ENCODE measurements at regions of chr2 and their contacts with region 1.

Region 1: DNA sequence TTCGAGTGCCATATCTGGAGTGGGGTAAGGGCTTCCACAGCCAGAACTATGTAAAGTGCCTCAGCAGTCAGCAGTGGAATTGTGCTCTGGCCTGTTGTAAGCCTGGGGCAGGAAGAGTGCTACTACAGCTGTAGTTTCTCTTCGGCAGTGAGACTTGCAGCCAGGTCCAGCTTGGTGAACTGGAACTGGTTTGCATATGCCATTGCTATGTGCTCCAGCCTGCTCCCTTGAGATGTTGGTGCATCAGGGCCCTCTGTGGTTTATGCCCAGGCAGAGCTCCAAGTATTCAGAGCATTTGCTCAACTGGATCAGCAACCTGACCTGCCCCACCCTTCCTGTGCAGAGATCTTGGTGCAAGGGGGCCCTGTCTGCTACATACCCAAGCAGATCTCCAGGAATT is 47.8 kb downstream of the ZNF804A start:
- DNase-seq: peak; percentile 63
- H3K4me3 ChIP-seq: peak overlapping the region in 1 of 3 experiments; percentile 0
- H3K27ac ChIP-seq: no peak overlapping the region
- H3K4me1 ChIP-seq: peaks cover 14% of the 10 kb centered on the region
- H3K27me3 ChIP-seq: no peaks in the 10 kb centered on the region
- CTCF ChIP-seq: no peak

Region 2: GRCh38 chr2:185255566-185255965 is 609.4 kb after region 1 on chr2:
- CTCF ChIA-PET with region 1: no interaction called
- dilution Hi-C with region 1: no loop called
- in situ Hi-C with region 1: loop called in 1 of 2 experiments (anchors 25 kb)
- intact Hi-C with region 1: no loop called
- DNase-seq: peak; percentile 4
- H3K4me3 ChIP-seq: no peak overlapping the region
- H3K27ac ChIP-seq: no peak overlapping the region
- H3K4me1 ChIP-seq: no peaks in the 10 kb centered on the region
- H3K27me3 ChIP-seq: peaks cover 2% of the 10 kb centered on the region
- CTCF ChIP-seq: no peak